B cell (primary cell): ENCODE measurements at regions of chr2 and their contacts with region 1.

Region 1: DNA sequence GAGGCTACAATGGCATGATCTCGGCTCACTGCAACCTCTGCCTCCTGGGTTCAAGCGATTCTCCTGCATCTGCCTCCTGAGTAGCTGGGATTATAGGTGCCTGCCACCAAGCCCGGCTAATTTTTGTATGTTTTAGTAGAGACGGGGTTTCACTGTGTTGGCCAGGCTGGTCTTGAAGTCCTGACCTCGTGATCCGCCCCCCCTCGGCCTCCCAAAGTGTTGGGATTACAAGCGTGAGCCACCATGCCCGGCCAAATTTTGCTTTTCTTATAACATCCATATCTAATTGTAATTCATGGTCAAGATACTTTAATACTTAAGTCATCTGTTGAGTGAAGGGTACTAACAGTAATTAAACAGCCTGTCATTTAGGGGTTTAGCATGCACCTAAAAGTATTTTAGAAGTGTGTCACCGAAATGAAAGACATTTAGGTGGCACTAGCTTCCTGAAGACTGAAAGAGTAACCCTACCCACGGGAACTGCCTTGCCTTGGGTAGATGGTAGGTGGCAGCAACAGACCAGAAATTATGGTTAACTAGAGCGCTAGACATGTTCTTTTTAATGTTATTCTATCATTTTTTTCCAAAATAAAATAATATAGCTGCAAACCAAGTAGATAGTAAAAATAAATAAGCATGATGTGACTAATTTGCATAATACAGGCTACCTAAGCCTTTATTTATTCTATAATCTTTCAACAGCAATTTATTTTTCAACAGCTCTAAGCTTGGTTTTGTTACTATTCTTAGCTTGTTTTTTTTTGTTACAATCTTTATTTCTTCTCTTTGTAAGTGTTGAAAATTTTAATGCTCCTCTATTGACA is 8.6 kb upstream of the ACYP2 start:
- DNase-seq: peak; percentile 74
- ATAC-seq: peak; percentile 31
- H3K4me3 ChIP-seq: no peak overlapping the region
- H3K4me3 Mint-ChIP-seq: peak overlapping the region; percentile 18
- H3K27ac ChIP-seq: no peak overlapping the region
- H3K27ac Mint-ChIP-seq: peak overlapping the region; percentile 41
- H3K4me1 ChIP-seq: peaks cover 39 to 40% of the 10 kb centered on the region in 2 donors
- H3K4me1 Mint-ChIP-seq: peaks cover 53% of the 10 kb centered on the region
- H3K27me3 ChIP-seq: no peaks in the 10 kb centered on the region
- H3K27me3 Mint-ChIP-seq: no peaks in the 10 kb centered on the region
- CTCF ChIP-seq: peak; percentile 80

Region 2: DNA sequence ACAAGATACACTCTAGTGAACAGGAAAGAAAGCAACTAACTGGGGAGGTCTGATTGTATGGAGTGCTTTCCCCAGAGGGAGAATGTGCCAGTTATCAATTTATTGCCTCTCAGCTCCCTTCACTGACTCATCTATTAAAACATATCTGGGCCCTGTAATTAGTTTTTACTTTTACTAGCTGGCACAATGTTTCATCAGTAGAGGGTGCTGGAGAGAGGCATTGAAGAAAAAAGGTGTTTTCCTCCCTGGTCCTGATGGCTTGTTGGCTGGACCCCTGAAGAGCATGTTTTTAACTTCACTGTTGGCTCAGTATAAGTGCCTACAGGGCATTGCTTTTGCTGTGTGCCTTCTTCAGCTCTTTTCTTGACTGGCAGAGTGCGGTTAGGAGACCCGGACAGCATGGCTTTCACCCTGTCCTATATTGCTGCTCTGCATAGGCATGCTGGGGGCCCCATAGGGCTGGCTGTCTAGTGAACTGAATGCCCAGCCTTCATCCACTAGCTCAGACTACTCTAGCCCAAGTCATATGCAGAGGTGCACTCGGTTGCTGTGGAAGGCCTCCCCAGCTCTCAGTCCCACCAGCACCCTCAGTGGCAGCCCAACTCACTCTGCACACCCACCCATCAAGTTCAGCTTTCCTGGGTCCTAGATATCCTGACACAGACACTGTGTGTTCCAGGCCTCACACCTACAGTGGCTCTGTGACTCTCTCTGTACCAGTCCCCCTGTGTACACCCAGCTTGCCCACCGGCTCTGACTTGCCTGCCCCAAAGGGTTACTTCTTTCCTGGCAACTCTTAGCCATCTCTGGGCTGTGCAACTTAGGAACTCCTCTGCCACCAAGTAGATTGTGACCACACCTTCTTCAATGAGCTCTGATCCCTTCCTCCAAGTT is 53.8 kb before region 1 on chr2:
- CTCF ChIA-PET with region 1: interaction called, 6 read pairs
- POLR2A ChIA-PET with region 1: no interaction called
- intact Hi-C with region 1: loop called (anchors 10 kb)
- DNase-seq: peak; percentile 6
- ATAC-seq: no peak
- H3K4me3 ChIP-seq: peak overlapping the region in 1 of 5 experiments; percentile 23
- H3K4me3 Mint-ChIP-seq: peak overlapping the region; percentile 59
- H3K27ac ChIP-seq: peak overlapping the region; percentile 64 to 84
- H3K27ac Mint-ChIP-seq: peak overlapping the region; percentile 84
- H3K4me1 ChIP-seq: peaks cover 23 to 31% of the 10 kb centered on the region in 2 donors
- H3K4me1 Mint-ChIP-seq: peaks cover 35% of the 10 kb centered on the region
- H3K27me3 ChIP-seq: no peaks in the 10 kb centered on the region
- H3K27me3 Mint-ChIP-seq: no peaks in the 10 kb centered on the region
- CTCF ChIP-seq: no peak

Region 3: DNA sequence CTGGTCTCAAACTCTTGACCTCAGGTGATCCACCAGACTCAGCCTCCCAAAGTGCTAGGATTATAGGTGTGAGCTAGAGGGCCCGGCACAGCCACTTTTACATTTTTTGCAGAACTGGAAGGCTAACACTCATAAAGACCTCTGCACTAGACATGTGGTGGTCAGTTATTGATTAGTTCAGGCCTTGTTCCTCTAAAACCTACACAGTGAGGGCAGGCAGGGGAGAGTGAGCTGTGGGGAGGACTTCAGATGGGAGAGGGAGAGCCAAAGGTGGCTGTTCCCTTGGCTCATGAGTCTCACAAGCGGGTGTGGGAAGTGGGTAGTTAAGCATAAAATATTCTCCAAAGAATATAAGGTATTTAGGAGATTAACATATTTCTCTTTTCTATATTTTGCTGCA is 20.7 kb before region 1 on chr2:
- CTCF ChIA-PET with region 1: no interaction called
- POLR2A ChIA-PET with region 1: no interaction called
- intact Hi-C with region 1: no loop called
- DNase-seq: no peak
- ATAC-seq: no peak
- H3K4me3 ChIP-seq: no peak overlapping the region
- H3K4me3 Mint-ChIP-seq: no peak overlapping the region
- H3K27ac ChIP-seq: no peak overlapping the region
- H3K27ac Mint-ChIP-seq: no peak overlapping the region
- H3K4me1 ChIP-seq: peaks cover 5 to 6% of the 10 kb centered on the region in 2 donors
- H3K4me1 Mint-ChIP-seq: peaks cover 30% of the 10 kb centered on the region
- H3K27me3 ChIP-seq: no peaks in the 10 kb centered on the region
- H3K27me3 Mint-ChIP-seq: no peaks in the 10 kb centered on the region
- CTCF ChIP-seq: no peak

Region 4: DNA sequence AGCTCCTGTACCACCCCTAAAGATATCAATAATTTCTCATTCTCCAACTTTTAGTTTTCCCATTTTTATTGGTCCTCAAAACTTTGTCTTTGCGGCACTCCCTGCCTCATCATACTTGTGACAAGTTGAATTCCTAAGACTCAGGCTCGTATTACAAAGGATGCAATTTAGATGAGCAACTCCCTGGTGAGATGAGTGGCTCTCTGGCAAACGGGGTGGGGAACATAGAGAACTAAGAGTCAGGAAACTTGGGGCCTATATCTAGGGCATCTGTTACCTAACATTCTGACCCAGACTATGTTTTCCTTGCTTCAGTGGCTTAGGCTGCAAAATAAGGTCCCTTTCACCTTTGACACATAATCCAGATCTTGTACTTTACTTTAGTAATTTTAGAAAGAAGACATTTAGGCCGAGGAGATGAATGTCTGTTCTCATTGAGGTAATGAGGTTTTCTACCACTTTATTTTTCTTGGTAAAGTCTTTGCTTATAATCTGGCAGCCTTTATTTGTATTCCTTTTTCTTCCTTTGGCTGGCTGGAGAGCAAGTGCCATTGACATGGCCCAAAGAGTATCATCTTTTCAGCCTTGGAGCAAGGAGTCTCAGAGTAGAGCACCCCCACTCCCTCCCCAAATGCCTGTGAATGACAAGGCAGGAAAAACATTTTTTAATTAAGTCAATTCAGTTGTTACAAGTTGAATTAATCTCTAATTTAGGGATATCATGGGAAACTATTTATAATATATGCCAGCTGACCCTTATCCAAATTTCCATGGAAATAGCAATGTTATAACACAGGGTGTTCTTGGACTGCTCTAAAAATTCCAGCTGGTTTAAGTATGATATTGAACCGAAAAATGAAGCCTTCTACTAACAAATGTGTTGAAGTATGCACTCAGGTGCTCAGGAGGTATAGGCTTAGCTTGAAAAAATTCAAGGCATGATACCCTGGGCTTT is 133.9 kb after region 1 on chr2:
- CTCF ChIA-PET with region 1: no interaction called
- POLR2A ChIA-PET with region 1: no interaction called
- intact Hi-C with region 1: no loop called
- DNase-seq: no peak
- ATAC-seq: no peak
- H3K4me3 ChIP-seq: no peak overlapping the region
- H3K4me3 Mint-ChIP-seq: no peak overlapping the region
- H3K27ac ChIP-seq: no peak overlapping the region
- H3K27ac Mint-ChIP-seq: no peak overlapping the region
- H3K4me1 ChIP-seq: no peaks in the 10 kb centered on the region
- H3K4me1 Mint-ChIP-seq: no peaks in the 10 kb centered on the region
- H3K27me3 ChIP-seq: no peaks in the 10 kb centered on the region
- H3K27me3 Mint-ChIP-seq: no peaks in the 10 kb centered on the region
- CTCF ChIP-seq: no peak

Region 5: DNA sequence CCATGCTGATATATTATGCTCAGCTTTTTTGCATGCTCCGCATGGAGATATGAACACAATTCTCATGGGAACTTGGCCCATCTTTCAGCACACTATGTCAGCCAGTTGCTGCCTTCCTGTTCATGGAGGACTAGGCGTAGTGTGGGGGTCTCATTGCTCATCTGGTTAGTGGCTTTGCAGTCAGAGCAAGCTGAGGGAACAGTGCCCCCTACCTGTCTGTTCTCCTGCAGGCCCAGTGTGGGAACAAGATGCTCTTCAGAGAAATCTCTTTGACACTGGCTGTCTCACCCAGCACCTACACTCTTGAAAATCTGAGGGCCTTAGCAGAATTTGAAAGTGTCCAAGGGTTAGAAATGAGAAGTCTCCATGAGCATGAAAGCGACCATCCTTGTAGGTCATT is 396.3 kb after region 1 on chr2:
- CTCF ChIA-PET with region 1: interaction called, 27 read pairs
- POLR2A ChIA-PET with region 1: no interaction called
- intact Hi-C with region 1: loop called (anchors 1 kb)
- DNase-seq: peak; percentile 46
- ATAC-seq: peak; percentile 33
- H3K4me3 ChIP-seq: no peak overlapping the region
- H3K4me3 Mint-ChIP-seq: no peak overlapping the region
- H3K27ac ChIP-seq: no peak overlapping the region
- H3K27ac Mint-ChIP-seq: no peak overlapping the region
- H3K4me1 ChIP-seq: no peaks in the 10 kb centered on the region
- H3K4me1 Mint-ChIP-seq: no peaks in the 10 kb centered on the region
- H3K27me3 ChIP-seq: no peaks in the 10 kb centered on the region
- H3K27me3 Mint-ChIP-seq: no peaks in the 10 kb centered on the region
- CTCF ChIP-seq: peak; percentile 16

Region 6: GRCh38 chr2:54634564-54635511 is 528.0 kb after region 1 on chr2:
- CTCF ChIA-PET with region 1: interaction called, 5 read pairs
- POLR2A ChIA-PET with region 1: no interaction called
- intact Hi-C with region 1: loop called (anchors 10 kb)
- DNase-seq: peak; percentile 68
- ATAC-seq: peak; percentile 65
- H3K4me3 ChIP-seq: no peak overlapping the region
- H3K4me3 Mint-ChIP-seq: peak overlapping the region; percentile 67
- H3K27ac ChIP-seq: peak overlapping the region; percentile 46 to 85
- H3K27ac Mint-ChIP-seq: peak overlapping the region; percentile 94
- H3K4me1 ChIP-seq: peaks cover 35 to 42% of the 10 kb centered on the region in 2 donors
- H3K4me1 Mint-ChIP-seq: peaks cover 60% of the 10 kb centered on the region
- H3K27me3 ChIP-seq: no peaks in the 10 kb centered on the region
- H3K27me3 Mint-ChIP-seq: no peaks in the 10 kb centered on the region
- CTCF ChIP-seq: no peak

Region 7: DNA sequence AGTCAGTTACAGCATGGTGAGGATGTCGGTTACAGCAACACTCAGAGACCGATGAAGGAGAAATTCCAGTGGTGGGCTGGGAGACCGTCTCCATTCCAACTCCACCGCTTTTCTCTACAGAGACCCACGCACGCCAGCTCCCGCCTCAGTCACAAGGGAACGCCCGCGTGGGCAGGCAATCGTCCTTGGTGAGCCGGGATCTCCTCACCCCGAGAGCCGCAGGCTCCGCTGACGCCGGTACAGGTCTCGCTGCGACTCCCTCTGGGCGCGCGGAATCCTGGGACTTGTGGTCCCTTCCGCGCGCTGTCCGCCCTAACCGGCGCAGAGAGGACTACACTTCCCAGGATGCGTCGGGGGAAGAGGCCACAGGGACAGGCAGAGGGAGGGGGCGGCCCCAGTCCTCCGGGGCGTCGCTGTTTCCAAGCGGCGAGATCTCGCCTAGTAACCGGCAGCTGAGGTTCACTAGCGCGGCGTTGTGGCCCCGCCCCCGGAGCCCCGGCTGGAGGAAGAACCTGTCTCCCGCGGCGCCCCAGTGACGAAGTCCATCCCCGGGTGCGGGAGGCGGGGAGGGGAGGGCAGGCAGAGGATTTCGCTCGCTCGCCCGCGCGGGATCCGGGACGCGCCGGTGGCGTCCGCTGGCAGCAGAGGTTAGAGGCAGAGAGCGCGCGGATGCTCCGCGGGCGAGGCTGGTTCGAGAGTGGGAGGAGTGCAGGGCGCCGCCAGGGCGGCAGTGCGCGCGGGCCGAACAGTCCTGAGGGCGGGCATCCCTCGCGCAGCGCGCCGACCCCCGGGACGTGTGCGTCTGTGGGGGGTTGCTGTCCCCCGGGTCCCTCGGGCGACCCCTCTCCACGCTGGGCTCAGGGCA is 616.5 kb after region 1 on chr2 and contains the start of gene EML6:
- CTCF ChIA-PET with region 1: interaction called, 5 read pairs
- POLR2A ChIA-PET with region 1: no interaction called
- intact Hi-C with region 1: loop called (anchors 5 kb)
- DNase-seq: peak; percentile 99
- ATAC-seq: peak; percentile 95
- H3K4me3 ChIP-seq: peak within 1 kb of the TSS; percentile 51 to 98 (median 79)
- H3K4me3 Mint-ChIP-seq: peak within 1 kb of the TSS; percentile 100
- H3K27ac ChIP-seq: peak within 1 kb of the TSS in 1 of 2 donors; percentile 59
- H3K27ac Mint-ChIP-seq: peak within 1 kb of the TSS; percentile 94
- H3K4me1 ChIP-seq: peaks cover 15 to 17% of the 10 kb centered on the region in 2 donors
- H3K4me1 Mint-ChIP-seq: peaks cover 37% of the 10 kb centered on the region
- H3K27me3 ChIP-seq: peaks cover 0 to 27% (median 8%) of the 10 kb centered on the region in 4 experiments
- H3K27me3 Mint-ChIP-seq: peaks cover 13% of the 10 kb centered on the region
- CTCF ChIP-seq: peak; percentile 50
- total RNA-seq, gene EML6: 47.2 and 53.7 TPM in 2 replicates

Region 8: GRCh38 chr2:55168221-55169154 is 1061.6 kb after region 1 on chr2:
- CTCF ChIA-PET with region 1: interaction called, 15 read pairs
- POLR2A ChIA-PET with region 1: no interaction called
- intact Hi-C with region 1: loop called (anchors 10 kb)
- DNase-seq: peak; percentile 68
- ATAC-seq: peak; percentile 57
- H3K4me3 ChIP-seq: no peak overlapping the region
- H3K4me3 Mint-ChIP-seq: no peak overlapping the region
- H3K27ac ChIP-seq: no peak overlapping the region
- H3K27ac Mint-ChIP-seq: no peak overlapping the region
- H3K4me1 ChIP-seq: no peaks in the 10 kb centered on the region
- H3K4me1 Mint-ChIP-seq: no peaks in the 10 kb centered on the region
- H3K27me3 ChIP-seq: no peaks in the 10 kb centered on the region
- H3K27me3 Mint-ChIP-seq: no peaks in the 10 kb centered on the region
- CTCF ChIP-seq: peak; percentile 81